Posterior cingulate gyrus (tissue), 11 donors: ENCODE measurements at regions of chr1 and their contacts with region 1.

Region 1: DNA sequence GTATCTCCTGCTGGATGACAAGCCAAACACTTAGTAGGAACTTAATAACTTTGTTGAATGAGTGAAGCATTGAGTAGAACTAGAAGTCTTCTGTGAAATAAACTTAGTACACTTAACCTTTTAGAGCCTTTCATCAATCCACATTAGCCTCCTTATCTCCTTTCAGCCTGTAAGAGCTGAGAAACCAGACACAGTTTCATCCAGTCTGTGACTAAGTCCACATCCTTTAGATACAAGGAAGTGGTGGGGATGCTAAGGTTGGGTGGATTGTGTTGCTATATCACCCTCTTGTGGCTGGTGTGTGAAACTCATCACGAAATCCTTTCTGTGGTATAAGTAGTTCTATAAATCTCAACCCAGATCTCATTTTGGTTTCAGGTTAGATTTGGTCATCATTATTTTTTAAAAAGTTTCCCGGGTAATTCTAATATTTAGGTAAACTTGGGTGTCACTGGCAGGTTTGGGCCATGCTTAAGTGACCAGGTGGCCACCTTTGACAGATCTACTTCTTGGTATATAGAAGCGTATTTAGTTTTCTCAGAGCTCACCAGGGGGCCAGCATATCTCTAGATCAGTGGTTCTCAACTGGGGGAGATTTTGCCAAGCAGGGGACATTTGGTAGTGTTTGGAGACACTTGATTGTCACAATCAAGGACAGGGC is 27.8 kb upstream of the CD84 start:
- DNase-seq: peak in 1 of 10 donors; percentile 7

Region 2: DNA sequence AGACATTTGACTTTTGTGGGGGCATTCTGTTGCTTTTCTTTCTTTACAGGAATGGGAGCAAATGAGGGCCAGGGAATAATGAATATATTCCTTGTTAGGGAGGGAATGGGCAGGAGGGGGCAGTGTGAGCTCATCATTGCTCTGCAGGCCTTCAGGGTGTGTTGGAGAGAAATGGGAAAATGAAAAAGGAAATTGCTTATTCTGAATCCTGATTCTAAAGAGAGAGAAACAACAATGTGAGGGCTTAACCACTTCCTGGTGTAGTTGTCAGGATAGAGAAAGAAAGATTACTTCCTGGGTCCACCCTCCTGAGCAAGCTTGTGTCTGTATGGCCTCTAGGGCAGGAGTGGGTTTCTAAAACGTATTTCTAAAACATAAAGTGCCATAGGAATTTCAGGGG is 178.5 kb before region 1 on chr1:
- intact Hi-C with region 1: loop called (anchors 1 kb)
- DNase-seq: peak in 7 of 10 donors; percentile 43 to 92 (median 57)